K562 (cell line): ENCODE measurements at regions of chr21 and their contacts with region 1.

Region 1: GRCh38 chr21:30634906-30635305 is at the start of gene KRTAP20-2:
- DNase-seq: no peak
- ATAC-seq: no peak
- H3K4me3 ChIP-seq: no peak within 1 kb of the TSS
- H3K27ac ChIP-seq: no peak within 1 kb of the TSS
- H3K4me1 ChIP-seq: no peaks in the 10 kb centered on the region
- H3K27me3 ChIP-seq: no peaks in the 10 kb centered on the region
- CTCF ChIP-seq: no peak
- EP300 ChIP-seq: no peak
- POLR2A ChIP-seq: no peak
- RAD21 ChIP-seq: no peak
- polyA plus RNA-seq, gene KRTAP20-2: not detected

Region 2: DNA sequence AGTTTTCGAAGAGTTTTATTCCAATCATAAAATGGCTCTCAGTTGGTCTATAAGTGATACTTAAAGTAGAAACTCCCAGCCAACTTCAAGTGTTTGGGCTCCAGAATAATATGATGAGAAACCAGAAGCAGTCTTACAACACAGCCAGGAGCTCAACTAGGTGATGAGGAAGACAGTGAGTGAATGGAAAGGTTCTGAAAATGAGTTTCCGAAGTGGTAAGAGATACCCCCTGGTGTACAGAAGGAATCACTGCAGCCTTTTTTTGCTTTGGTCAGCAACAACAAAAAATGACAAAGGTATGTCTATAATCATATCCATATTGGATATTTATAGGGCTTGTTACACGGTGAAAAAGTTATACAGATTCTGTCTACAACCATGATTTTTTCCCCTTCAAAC is 171.2 kb before region 1 on chr21:
- CTCF ChIA-PET with region 1: no interaction called
- POLR2A ChIA-PET with region 1: no interaction called
- in situ Hi-C with region 1: no loop called
- intact Hi-C with region 1: loop called (anchors 10 kb)
- DNase-seq: peak in 2 of 4 experiments; percentile 11 to 20
- ATAC-seq: no peak
- H3K4me3 ChIP-seq: no peak overlapping the region
- H3K27ac ChIP-seq: no peak overlapping the region
- H3K4me1 ChIP-seq: no peaks in the 10 kb centered on the region
- H3K27me3 ChIP-seq: no peaks in the 10 kb centered on the region
- CTCF ChIP-seq: peak in 2 of 3 experiments; percentile 28 to 29; a peak in 2 of 6 replicates
- EP300 ChIP-seq: no peak
- POLR2A ChIP-seq: no peak
- RAD21 ChIP-seq: peak in 1 of 2 experiments; percentile 43; a peak in 2 of 4 replicates

Region 3: GRCh38 chr21:30769724-30770431 is 135.0 kb after region 1 on chr21:
- CTCF ChIA-PET with region 1: no interaction called
- POLR2A ChIA-PET with region 1: no interaction called
- in situ Hi-C with region 1: no loop called
- intact Hi-C with region 1: no loop called
- DNase-seq: no peak
- ATAC-seq: no peak
- H3K4me3 ChIP-seq: no peak overlapping the region
- H3K27ac ChIP-seq: no peak overlapping the region
- H3K4me1 ChIP-seq: no peaks in the 10 kb centered on the region
- H3K27me3 ChIP-seq: no peaks in the 10 kb centered on the region
- CTCF ChIP-seq: no peak
- EP300 ChIP-seq: no peak
- POLR2A ChIP-seq: no peak
- RAD21 ChIP-seq: no peak